Activated T-helper 1 cell treated with anti-CD3 and anti-CD28 coated beads, Interleukin-12 subunit alpha, Interleukin-12 subunit beta, Interleukin-2, Interleukin-4 antibody, amounts not matched to agents 30 ng/mL and 10 ng/mL and 1 ng/mL, durations not matched to agents 14 hours and 24 hours and 36 hours (primary cell): ENCODE measurements at regions of chr16 and their contacts with region 1.

Region 1: GRCh38 chr16:89873972-89874689 is 739 bp downstream of the TCF25 start:
- DNase-seq: peak; percentile 88
- H3K4me3 Mint-ChIP-seq: peak overlapping the region; percentile 90
- H3K27ac Mint-ChIP-seq: peak overlapping the region; percentile 99
- H3K4me1 Mint-ChIP-seq: peaks cover 11% of the 10 kb centered on the region
- H3K27me3 Mint-ChIP-seq: peaks cover 2% of the 10 kb centered on the region

Region 2: DNA sequence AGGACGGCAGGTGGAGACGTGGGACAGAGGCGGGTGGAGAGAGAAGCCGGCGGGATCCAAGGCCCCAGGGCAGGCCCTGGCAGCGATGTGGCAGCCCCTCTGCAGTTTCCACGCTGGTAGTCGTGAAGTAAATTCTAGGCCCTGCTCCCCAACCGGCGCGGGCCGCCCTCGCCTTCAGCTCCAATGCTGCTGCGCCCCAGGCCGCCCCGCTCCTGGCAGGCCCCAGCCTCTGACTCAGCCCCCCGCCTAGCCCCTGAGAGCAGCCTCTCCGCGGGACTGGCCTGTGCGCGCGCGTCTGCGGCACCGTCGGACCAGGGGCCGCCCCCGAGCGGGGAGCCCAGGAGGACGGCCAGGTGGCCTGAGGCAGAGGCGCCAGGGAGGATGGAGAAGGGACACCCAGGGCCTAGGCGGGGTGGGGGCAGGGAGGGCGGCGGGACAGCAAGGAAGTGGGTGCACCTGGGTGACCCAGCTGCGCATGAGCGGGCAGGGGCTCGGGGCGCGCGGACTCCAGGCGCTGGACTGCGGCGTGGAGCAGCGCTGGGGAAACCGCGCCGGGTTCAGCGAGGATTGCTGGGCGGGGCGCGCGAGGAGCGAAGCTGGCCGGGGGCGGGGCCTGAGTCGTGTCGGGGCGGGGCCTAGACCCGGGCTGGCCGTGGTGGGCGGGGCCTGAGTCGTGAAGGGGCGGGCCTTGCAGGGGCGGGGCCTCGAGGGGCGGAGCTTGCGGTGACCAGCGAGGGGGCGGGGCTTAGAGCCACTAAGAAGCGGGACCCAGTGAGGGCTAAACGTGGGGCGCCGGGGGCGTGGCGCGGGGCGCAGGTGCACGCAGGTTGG is 627.0 kb before region 1 on chr16:
- intact Hi-C with region 1: loop called (anchors 1 kb)
- DNase-seq: peak; percentile 88
- H3K4me3 Mint-ChIP-seq: peak overlapping the region; percentile 66
- H3K27ac Mint-ChIP-seq: no peak overlapping the region
- H3K4me1 Mint-ChIP-seq: peaks cover 12% of the 10 kb centered on the region
- H3K27me3 Mint-ChIP-seq: peaks cover 2% of the 10 kb centered on the region

Region 3: DNA sequence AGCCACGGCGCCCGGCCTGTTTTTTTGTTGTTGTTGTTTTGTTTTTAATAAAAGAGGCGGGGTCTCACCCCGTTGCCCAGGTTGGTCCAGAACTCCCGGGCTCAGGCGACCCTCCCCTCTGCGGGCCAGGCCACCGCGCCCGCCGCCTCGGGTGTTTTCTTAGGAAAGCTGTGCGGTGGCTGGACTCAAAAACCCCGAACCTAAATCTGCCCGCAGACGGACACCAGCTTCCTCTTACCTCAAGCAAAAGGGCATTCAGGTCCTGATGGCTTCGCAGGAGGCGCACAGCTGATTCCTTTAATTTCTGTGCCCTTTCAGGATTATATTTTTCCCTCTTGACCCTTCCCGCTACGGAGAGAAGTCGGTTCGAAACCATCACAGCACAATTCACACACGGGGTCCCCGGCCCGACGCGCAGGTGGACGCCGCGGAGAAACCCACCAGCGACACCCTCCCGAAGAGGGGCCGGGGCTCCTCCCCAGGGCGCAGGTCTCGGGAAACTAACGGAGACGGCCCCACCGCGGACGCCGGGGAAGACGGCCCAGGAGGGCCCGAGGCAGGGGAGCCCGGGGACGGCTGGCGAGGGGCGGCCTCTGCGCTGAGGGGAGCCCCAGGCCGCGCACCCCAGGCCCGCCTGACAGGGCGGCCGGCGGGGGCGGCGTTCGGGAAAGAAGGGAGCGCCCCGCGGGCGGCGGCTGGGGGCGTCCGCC is 58.3 kb before region 1 on chr16:
- intact Hi-C with region 1: loop called (anchors 1 kb)
- DNase-seq: no peak
- H3K4me3 Mint-ChIP-seq: peak overlapping the region; percentile 86
- H3K27ac Mint-ChIP-seq: peak overlapping the region; percentile 58
- H3K4me1 Mint-ChIP-seq: peaks cover 26% of the 10 kb centered on the region
- H3K27me3 Mint-ChIP-seq: no peaks in the 10 kb centered on the region

Region 4: GRCh38 chr16:89860747-89861304 is 13.3 kb before region 1 on chr16:
- intact Hi-C with region 1: loop called (anchors 1 kb)
- DNase-seq: peak; percentile 71
- H3K4me3 Mint-ChIP-seq: no peak overlapping the region
- H3K27ac Mint-ChIP-seq: no peak overlapping the region
- H3K4me1 Mint-ChIP-seq: peaks cover 33% of the 10 kb centered on the region
- H3K27me3 Mint-ChIP-seq: no peaks in the 10 kb centered on the region

Region 5: DNA sequence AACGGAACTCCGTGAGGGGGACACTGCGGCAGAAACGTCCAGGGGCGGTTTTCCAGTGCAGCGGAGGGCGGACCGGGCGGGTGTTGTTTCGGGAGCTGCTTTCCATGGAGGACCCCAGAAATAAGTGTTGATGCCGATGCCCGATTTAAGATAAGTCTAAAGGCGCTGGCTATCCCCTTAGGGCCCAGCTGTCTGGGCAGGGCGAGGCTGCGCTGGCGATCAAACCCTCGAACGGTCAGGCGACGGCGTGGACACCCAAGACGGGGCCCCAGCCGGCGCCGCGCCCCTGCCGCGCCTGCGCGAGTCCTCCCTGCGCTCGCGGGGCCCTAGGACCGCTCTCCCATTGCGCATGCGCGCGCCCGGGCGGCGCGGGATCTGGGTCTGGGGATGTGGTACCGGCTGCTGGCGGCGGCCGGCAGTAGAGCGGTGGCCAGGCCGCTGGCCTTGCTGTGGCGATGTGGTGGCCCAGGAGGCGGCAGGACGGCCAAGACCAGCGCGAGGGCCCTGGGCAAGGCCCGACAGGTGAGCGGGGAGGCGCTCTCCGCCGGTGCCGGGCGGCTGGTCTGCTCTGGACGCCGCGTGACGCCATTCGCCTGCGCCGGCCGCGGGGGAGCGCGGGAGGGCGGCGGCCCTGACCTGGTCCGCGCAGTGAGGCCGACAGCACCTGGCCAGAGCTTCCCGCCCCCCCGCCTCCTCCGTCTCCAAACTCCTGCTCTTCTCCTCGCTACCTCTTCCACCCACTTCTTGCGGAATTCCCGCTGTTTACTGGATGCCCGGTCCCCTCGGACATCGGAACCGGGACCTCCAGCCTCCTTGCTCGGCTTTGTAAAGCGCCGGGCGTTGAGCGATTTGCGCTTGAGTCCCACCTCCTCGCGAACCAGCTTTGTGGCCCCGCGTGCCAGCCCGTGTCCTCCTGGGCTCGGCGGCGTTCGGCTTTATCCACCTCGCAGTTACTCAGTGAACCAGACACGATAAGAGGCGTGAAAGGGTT is 98.4 kb after region 1 on chr16:
- intact Hi-C with region 1: loop called (anchors 1 kb)
- DNase-seq: peak; percentile 92
- H3K4me3 Mint-ChIP-seq: peak overlapping the region; percentile 99
- H3K27ac Mint-ChIP-seq: peak overlapping the region; percentile 94
- H3K4me1 Mint-ChIP-seq: peaks cover 29% of the 10 kb centered on the region
- H3K27me3 Mint-ChIP-seq: peaks cover 2% of the 10 kb centered on the region